Activated CD8-positive, alpha-beta T cell treated with anti-CD3 and anti-CD28 coated beads, Interleukin-2, amount 10 ng/mL, durations not matched to agents 7 days and 5 days (primary cell): ENCODE measurements at regions of chr11 and their contacts with region 1.

Region 1: DNA sequence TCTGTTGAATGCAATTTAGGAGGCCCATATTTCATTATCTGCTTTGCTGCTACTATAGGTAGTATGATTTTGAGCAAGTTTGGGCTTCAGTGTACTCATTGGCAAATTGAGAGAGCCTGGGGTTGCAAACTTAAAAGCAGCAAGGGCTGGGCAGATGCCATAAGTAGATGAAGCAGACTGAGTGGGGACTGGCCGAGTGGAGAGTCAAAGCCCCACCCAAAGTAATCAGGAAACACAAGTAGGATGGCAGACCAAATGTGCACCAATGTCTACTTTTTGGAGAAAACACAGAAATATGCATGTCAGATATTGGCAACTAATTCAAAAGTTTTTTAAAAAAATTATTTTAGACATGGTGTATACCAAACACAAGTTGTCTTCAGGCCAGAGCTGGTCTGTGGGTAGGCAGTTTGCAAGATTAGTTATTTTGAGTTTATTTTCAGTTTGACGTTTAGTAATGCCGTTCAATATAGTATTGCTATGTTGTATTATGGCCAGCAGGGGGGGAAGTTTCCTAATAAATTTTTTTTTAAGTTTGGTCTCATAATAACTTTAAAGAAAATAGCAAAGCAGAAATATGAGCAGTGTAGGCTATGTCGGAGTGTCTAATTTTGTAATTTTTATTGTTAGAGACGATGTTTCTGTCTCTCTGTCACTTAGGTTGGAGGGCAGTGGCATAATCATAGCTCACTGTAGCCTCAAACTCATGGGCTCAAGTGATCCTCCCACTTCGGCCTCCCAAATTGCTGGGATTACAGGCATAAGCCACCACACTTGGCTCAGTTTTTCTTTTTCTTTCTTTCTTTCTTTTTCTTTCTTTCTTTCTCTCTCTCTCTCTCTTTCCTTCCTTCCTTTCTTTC is 105.1 kb downstream of the HIPK3 start:
- DNase-seq: peak; percentile 30
- ATAC-seq: peak; percentile 64
- H3K4me3 Mint-ChIP-seq: no peak overlapping the region
- H3K27ac Mint-ChIP-seq: no peak overlapping the region
- H3K4me1 Mint-ChIP-seq: peaks cover 2% of the 10 kb centered on the region
- H3K27me3 Mint-ChIP-seq: peaks cover 18% of the 10 kb centered on the region

Region 2: DNA sequence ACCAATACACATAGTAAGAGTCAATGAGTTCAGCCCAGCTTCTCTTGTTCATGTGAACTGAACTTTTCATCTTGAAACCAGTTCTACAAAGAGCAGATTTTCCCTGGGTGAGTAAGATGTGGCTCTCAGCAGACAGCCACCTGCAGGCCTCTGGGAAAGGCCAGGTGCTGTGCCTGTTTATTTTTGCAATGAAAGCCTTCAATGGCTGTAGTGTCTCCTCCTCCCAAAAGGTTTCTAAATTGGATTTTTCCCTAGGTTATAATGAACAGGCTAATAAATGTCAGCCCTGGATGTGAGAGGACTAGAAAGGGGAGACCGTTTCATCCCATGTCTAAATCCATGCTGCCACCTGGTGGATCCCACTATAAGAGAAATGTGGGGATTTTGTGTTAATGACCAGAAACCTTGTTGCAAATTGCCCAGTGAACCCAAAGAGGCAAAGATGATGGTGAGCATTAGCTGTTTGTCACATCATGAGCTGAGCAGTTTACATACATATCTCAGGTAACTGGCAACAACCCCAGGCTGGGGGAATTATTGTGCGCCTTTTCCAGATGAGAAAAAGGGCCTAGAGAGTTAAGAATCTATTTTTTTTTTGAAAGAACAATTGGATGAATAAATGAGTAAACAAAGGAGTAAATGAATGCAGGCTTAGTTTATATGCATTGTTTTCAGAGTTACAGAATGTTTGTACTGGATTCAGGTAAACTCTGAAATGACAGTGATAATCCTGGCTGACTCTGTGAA is 325.6 kb after region 1 on chr11:
- CTCF ChIA-PET with region 1: interaction called, 11 read pairs
- POLR2A ChIA-PET with region 1: no interaction called
- DNase-seq: no peak
- ATAC-seq: no peak
- H3K4me3 Mint-ChIP-seq: no peak overlapping the region
- H3K27ac Mint-ChIP-seq: no peak overlapping the region
- H3K4me1 Mint-ChIP-seq: no peaks in the 10 kb centered on the region
- H3K27me3 Mint-ChIP-seq: peaks cover 14% of the 10 kb centered on the region